Head of caudate nucleus (tissue), 42 donors: ENCODE measurements at regions of chr14 and their contacts with region 1.

Region 1: DNA sequence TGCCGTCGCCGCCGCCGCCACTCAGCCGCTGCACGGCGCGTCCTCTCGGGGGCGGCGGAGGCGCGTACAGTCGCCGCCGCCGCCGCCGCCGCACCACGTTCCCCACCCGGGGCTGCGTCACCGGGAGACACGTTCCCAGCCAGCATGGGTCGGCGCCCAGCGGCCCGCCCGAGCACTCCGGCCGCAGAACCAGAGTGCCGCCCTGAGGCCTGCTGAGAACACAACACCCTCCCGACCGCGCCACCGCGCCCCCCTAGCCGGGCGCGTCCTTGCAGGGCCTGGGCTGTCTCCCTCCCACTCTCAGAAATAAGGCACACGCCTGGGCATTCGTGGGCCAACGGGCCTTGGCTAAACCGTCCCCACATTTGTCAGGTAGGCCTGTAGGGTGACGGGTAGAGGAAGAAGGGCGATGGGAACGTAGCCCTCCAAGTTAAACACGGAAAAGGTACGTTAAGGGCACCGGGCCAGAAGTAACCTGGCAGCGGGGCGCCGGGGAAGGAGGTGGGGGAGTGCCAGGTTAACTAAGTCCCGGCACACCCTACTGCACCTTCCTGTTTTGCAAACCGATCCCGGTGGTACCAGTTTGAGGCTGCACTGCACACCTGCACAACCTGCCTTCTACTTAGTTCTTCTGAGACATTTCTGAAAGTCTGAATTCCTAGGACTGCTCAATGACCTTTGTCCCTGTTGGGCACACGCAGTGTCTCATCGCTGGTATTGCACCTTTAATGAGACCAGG is at the start of gene MAP4K5:
- DNase-seq: peak; percentile 80 to 97 (median 93)

Region 2: DNA sequence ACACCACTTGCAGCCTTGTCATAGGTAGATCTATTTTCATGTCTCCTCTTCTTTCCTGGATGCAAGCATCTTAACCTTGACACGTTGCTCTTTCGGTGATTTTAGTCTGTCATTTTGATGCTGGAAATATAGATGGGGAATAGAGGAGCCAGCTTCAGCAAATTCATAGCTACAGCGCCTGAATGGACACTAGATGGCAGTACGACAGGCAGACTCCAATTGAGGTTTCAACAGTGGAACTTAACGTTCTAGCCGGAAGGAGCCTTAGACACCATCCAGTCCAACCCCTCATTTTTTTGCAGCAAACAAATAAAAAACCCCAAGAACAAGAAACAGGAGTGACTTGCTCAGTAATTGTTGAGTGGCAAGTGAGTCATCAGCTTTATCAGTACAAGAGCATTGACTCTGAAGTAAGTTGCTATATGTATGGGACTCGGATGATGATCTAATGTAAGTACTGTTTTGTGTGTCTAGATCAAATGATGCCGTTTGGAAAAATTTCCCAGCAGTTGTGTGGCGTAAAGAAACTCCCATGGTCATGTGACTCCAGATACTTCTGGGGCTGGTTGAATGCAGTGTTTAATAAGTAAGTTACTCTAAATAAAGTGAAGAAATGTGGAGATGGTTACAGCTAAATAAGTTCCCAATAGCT is 211.5 kb before region 1 on chr14:
- intact Hi-C with region 1: loop called (anchors 2 kb)
- DNase-seq: peak in 40 of 42 donors; percentile 42 to 91 (median 79)

Region 3: DNA sequence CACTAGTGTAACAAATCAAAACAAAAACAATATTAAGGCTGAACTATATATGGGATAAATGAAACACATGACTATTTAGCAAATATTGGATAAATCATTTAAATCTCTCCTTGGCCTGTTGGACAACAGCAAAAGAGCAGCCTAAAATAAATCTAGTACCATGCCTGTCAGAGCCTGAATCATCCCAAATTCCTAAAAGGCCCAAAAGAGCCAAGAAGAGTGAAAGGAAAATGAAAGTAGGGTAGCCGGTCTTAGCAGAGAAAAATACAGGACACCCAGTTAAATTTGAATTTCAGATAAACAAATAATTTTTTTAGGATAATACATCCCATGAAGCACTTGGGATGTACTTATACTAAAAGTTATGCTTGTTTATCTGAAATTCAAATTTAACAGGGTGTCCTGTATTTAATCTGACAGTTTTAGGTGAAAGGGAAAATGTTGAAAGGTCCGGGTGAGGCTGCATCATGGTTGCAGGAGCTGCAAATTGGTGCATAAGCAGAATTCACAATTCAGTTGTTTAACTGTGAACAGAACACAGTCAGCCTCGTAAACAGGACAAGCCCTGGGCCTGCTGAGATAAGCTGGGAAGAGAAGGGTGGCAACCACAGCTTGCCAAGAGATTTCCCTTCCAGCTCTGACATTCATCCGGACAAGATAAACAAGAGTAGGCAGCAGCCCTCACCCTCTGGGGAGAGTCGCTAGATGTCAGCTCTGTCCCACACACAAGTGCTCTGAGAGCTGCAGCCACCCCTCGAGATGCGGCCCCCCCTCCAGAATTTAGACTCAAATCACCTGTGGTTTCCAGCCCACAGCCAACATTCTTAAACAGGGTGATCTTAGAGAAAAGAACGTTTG is 190.2 kb before region 1 on chr14:
- intact Hi-C with region 1: loop called (anchors 5 kb)
- DNase-seq: peak; percentile 50 to 91 (median 80)

Region 4: GRCh38 chr14:50354527-50354926 is 178.1 kb before region 1 on chr14:
- intact Hi-C with region 1: no loop called
- DNase-seq: no peak

Region 5: GRCh38 chr14:50756300-50756699 is 223.6 kb after region 1 on chr14:
- intact Hi-C with region 1: no loop called
- DNase-seq: no peak